GM18951 (cell line): ENCODE measurements at regions of chr22 and their contacts with region 1.

Region 1: GRCh38 chr22:40636380-40637182 is at the start of gene MRTFA:
- POLR2A ChIP-seq: peak; percentile 89

Region 2: DNA sequence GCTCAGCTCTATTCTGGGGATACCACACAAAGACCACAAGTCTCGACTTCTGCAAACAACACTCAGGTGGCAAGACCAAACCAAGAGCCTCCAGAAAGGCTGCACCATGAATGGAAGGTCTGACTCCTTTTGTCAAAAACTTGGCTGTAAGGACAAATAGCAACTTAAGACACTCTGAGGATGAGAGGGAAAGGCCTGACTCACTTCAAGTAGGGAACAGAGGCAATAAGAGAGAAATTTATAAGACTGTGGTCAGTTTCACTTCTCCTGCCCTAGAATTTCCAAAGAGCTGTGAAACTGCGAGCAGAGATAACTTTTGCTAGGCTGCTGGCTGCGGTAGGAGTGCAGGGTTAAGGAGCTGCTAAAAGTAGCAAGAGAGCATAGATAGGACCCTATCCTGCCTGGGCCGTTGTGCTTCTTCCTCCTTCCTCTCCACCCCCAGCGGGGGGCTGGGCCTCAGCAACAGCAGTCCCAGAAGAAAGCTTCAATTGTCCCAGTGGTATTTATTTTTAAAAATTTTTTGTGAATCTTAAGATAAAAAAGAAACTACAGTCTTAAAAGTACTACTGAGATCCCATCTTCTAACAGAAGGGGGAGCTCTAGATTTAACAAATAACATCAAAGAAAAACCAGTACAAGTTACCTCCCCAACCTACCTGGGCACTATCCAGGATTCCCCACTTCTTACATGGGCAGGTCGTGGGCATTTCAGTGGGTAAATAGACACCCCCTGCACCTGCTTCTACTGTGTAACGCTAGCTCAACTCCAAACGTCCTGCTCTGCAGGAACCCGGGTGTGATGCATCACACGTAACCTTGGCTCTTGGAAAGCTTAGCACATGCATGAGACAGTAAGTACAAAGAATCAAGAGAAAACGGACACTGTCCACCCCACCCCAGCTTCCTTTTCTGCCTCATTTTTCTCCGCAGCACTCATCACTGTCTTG is 199.8 kb before region 1 on chr22:
- in situ Hi-C with region 1: loop called (anchors 25 kb)
- POLR2A ChIP-seq: no peak

Region 3: GRCh38 chr22:40525249-40525884 is 111.2 kb before region 1 on chr22:
- in situ Hi-C with region 1: loop called (anchors 5 kb)
- POLR2A ChIP-seq: no peak

Region 4: DNA sequence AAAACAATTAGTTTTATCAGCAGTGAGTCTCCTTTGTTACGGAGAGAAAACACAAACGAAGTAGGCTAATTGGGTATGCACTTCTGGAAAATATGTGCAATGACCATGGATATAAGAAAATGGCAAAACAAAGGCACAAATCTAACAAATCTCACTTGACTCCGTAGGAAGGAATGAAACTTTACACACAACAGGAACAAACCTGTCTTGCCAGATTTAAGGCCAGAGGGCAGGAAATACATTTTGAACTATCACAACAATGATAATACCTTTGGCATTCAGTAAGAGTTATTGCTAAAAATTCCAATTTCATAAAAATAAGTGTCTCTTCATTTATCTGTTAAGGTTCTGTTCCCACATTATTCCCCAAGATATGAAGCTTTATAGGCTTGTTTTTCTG is 145.9 kb after region 1 on chr22:
- in situ Hi-C with region 1: no loop called
- POLR2A ChIP-seq: no peak

Region 5: GRCh38 chr22:40838486-40838885 is 201.9 kb after region 1 on chr22:
- in situ Hi-C with region 1: no loop called
- POLR2A ChIP-seq: no peak

Region 6: GRCh38 chr22:40939202-40939601 is 302.6 kb after region 1 on chr22:
- in situ Hi-C with region 1: no loop called
- POLR2A ChIP-seq: no peak